Activated B cell treated with CpG ODN at 0.5 μM for 24 hours (primary cell): ENCODE measurements at regions of chr22 and their contacts with region 1.

Region 1: DNA sequence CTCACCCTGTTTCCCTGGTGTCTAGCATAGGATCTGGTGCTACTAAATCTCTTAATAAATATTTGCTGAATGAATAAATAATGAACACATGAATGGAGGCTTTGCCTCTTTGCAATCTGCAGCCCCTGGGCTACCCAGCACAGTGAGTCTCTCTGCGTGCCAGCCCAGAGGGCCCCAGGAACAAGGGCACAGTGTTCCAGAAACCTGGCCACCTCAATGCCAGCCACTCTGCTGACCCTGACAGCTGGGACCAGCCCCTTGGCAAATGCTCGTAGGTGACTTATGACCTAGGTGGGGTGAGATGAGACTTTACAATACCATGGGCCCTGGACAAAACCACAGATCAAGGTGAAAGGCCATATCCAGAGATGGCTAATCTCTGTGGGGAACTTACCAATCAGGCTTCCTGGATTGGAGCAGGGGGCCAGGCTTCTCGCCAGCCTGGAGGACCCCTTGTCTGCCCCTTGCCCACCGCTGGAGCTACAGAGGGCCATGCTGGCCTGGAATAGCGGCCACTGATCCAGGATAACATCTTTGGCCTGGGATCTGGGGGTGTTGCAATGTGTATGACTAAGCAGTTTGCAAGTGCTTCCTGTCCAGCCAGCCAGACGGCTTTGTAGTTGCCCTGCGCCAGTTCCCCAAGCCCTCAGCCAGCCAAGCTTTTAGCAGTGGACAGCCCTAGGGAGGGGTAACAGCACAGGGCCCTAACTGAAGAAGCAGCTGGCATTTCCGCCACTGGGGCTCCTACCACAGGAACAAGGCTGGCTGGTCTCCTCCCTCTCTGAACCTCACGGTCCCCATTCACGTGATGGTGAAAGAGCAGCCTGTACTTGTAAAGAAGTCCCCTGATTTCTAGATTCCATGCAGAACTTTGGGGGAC is 31.9 kb downstream of the UQCR10 start:
- DNase-seq: no peak
- ATAC-seq: no peak
- H3K4me3 Mint-ChIP-seq: no peak overlapping the region
- H3K27ac Mint-ChIP-seq: no peak overlapping the region
- H3K4me1 Mint-ChIP-seq: peaks cover 12% of the 10 kb centered on the region
- H3K27me3 Mint-ChIP-seq: no peaks in the 10 kb centered on the region
- CTCF ChIP-seq: no peak

Region 2: GRCh38 chr22:29426476-29426875 is 372.6 kb before region 1 on chr22:
- CTCF ChIA-PET with region 1: no interaction called
- POLR2A ChIA-PET with region 1: no interaction called
- intact Hi-C with region 1: no loop called
- DNase-seq: no peak
- ATAC-seq: no peak
- H3K4me3 Mint-ChIP-seq: no peak overlapping the region
- H3K27ac Mint-ChIP-seq: no peak overlapping the region
- H3K4me1 Mint-ChIP-seq: peaks cover 5% of the 10 kb centered on the region
- H3K27me3 Mint-ChIP-seq: peaks cover 7% of the 10 kb centered on the region
- CTCF ChIP-seq: no peak

Region 3: DNA sequence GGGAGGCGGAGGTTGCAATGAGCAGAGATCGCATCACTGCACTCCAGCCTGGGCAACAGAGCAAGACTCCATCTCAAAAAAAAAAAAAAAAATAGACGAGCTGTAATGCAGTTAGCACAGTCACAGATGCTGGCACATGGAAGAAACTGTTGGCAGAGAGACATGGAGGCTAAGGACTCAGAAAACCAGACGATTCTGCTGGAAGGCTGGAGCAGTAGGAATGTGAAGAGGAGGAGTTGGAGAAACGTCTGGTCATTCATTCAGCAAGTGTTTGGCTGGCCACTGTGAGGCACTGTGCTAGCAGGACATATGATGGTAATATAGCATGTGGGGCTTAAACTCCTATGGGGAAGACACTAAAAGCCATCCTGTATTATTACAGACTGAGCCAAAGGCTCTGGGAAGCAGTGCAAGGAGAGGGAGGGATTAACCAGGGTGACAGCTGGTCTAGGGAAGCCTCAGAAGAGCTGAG is 26.8 kb before region 1 on chr22:
- CTCF ChIA-PET with region 1: no interaction called
- POLR2A ChIA-PET with region 1: interaction called, 10 read pairs
- intact Hi-C with region 1: no loop called
- DNase-seq: no peak
- ATAC-seq: no peak
- H3K4me3 Mint-ChIP-seq: no peak overlapping the region
- H3K27ac Mint-ChIP-seq: no peak overlapping the region
- H3K4me1 Mint-ChIP-seq: peaks cover 17% of the 10 kb centered on the region
- H3K27me3 Mint-ChIP-seq: no peaks in the 10 kb centered on the region
- CTCF ChIP-seq: no peak